ENCODE measurements at regions of chr10 and their contacts with region 1.

Region 1: DNA sequence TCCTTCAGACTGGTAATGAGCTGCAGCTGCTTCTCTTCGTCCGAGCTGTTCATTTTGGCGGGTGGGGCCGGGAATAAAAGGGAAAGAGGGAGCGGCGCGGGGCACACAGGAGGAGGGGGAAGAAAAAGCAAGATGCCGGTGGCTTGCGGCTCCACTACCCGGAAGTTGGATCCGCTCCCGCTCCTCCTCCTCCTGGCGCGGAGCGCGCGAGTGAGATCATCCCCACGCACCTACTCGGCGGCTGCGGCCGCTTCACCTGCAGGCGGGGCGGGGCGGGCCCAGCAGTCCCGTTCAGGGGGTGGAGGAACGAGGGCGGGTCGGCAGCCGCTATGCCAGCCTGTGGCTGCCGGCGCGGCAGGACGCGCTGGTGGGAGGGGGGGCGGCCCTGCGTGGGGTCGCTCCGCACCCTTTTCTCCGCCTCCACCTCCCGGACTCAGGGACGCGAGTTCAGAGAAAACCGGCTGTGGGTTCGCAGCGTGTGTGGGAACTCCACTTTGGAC is at the start of gene SHTN1:
- DNase-seq: peak; percentile 83
- H3K4me3 Mint-ChIP-seq: peak within 1 kb of the TSS; percentile 82
- H3K27ac Mint-ChIP-seq: peak within 1 kb of the TSS; percentile 89
- H3K4me1 Mint-ChIP-seq: peaks cover 17% of the 10 kb centered on the region
- H3K27me3 Mint-ChIP-seq: no peaks in the 10 kb centered on the region
- CTCF ChIP-seq: no peak
- total RNA-seq, gene SHTN1: 39.2 and 49.5 TPM in 2 replicates

Region 2: GRCh38 chr10:116849248-116850057 is 155.6 kb before region 1 on chr10 and contains the start of gene ENO4:
- CTCF ChIA-PET with region 1: no interaction called
- POLR2A ChIA-PET with region 1: no interaction called
- intact Hi-C with region 1: loop called (anchors 2 kb)
- DNase-seq: peak; percentile 89
- H3K4me3 Mint-ChIP-seq: peak within 1 kb of the TSS; percentile 90
- H3K27ac Mint-ChIP-seq: peak within 1 kb of the TSS; percentile 95
- H3K4me1 Mint-ChIP-seq: peaks cover 29% of the 10 kb centered on the region
- H3K27me3 Mint-ChIP-seq: no peaks in the 10 kb centered on the region
- CTCF ChIP-seq: no peak
- total RNA-seq, gene ENO4: 0.15 TPM in 1 of 2 replicates, not detected in the other

Region 3: DNA sequence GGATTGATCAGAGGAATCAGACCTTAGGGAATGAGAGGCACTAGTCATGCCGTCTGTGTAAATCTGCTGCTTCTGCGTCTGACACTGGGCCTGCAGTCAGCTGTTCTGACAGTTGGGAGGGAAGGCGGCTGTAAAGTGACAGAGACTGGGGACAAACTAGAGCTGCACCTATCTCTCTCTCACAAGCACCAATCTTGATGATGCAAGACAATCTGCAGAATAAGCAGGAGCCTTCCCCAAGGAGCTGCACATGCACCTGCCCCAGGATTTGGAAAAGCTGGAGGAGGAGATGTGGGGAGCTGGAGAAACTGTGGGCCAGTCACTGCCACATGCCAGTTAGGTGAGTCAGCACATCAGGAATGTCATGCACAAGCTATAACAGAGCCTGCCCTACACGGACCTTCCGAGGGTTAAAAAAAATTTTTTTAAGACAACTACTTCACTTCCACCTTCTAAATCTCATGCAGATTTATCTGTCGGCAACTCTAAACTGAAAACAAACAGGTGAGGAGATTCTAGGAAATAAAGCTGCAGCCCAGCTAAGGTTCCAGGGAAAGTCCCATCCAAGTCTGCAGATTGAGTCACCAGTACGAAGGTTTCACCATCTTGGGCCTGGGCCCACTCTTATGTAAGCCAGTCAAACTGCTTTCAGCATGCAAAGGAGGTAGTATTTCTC is 116.6 kb before region 1 on chr10:
- CTCF ChIA-PET with region 1: no interaction called
- POLR2A ChIA-PET with region 1: interaction called, 8 read pairs
- intact Hi-C with region 1: loop called (anchors 2 kb)
- DNase-seq: peak; percentile 93
- H3K4me3 Mint-ChIP-seq: peak overlapping the region; percentile 16
- H3K27ac Mint-ChIP-seq: no peak overlapping the region
- H3K4me1 Mint-ChIP-seq: peaks cover 27% of the 10 kb centered on the region
- H3K27me3 Mint-ChIP-seq: no peaks in the 10 kb centered on the region
- CTCF ChIP-seq: no peak

Region 4: DNA sequence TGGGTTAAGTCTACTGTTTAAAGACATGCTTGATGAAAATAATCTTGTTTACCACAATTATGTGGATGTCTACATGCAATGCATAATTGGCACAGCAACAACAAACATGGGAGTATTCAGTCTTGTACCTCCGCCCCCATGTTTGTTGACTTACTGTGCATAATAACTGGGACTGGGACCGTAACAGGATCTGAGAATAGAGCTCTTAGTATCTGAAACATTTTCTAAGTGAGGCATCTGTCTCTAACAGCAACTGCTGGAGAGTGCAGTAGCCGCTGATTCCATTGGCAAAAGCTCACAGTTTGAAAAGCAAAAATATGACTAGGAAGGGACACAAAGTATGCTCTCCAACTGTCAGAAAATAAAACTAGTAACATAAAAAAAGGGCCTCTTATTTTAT is 94.2 kb before region 1 on chr10:
- CTCF ChIA-PET with region 1: no interaction called
- POLR2A ChIA-PET with region 1: no interaction called
- intact Hi-C with region 1: no loop called
- DNase-seq: no peak
- H3K4me3 Mint-ChIP-seq: no peak overlapping the region
- H3K27ac Mint-ChIP-seq: no peak overlapping the region
- H3K4me1 Mint-ChIP-seq: no peaks in the 10 kb centered on the region
- H3K27me3 Mint-ChIP-seq: no peaks in the 10 kb centered on the region
- CTCF ChIP-seq: no peak

Region 5: DNA sequence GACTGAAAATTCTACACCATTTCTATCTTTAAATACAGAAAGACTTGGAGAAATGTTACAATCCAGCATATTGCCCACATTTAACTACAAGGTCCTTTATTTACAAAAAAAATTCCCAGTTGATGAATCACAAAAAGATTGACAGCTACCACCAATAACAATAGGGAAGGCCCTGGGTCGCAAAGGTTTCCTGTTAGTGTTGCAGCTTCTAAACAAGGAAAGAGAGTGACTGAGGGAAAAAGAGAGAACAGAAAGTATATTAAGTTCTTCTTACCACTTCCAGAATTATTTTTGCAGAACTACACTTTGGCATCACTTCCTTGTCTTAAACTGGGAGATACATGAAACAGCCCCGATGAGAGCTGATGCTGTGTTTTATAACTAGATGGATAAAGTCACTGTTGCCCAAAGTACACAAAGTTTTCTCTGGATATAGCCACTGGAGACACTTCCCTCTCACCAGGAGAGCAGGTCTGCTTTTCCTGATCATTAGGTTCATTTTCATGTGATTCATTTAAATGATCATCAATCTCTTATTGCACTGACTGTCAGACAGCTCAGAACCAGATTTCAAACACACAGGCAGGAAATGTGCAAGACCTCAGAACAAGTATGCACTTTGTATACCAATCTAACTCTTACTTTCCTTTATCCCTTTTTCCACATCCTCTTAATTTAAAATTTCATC is 57.1 kb before region 1 on chr10:
- CTCF ChIA-PET with region 1: no interaction called
- POLR2A ChIA-PET with region 1: interaction called, 10 read pairs
- intact Hi-C with region 1: loop called (anchors 1 kb)
- DNase-seq: peak; percentile 66
- H3K4me3 Mint-ChIP-seq: peak overlapping the region; percentile 33
- H3K27ac Mint-ChIP-seq: peak overlapping the region; percentile 79
- H3K4me1 Mint-ChIP-seq: peaks cover 15% of the 10 kb centered on the region
- H3K27me3 Mint-ChIP-seq: no peaks in the 10 kb centered on the region
- CTCF ChIP-seq: no peak

Region 6: GRCh38 chr10:116974473-116975005 is 30.5 kb before region 1 on chr10:
- CTCF ChIA-PET with region 1: interaction called, 4 read pairs
- POLR2A ChIA-PET with region 1: interaction called, 5 read pairs
- intact Hi-C with region 1: loop called (anchors 2 kb)
- DNase-seq: peak; percentile 82
- H3K4me3 Mint-ChIP-seq: peak overlapping the region; percentile 15
- H3K27ac Mint-ChIP-seq: peak overlapping the region; percentile 77
- H3K4me1 Mint-ChIP-seq: peaks cover 16% of the 10 kb centered on the region
- H3K27me3 Mint-ChIP-seq: no peaks in the 10 kb centered on the region
- CTCF ChIP-seq: no peak

Region 7: GRCh38 chr10:117167789-117168674 is 163.0 kb after region 1 on chr10:
- CTCF ChIA-PET with region 1: interaction called, 3 read pairs
- POLR2A ChIA-PET with region 1: no interaction called
- intact Hi-C with region 1: loop called (anchors 5 kb)
- DNase-seq: peak; percentile 43
- H3K4me3 Mint-ChIP-seq: peak overlapping the region; percentile 14
- H3K27ac Mint-ChIP-seq: no peak overlapping the region
- H3K4me1 Mint-ChIP-seq: no peaks in the 10 kb centered on the region
- H3K27me3 Mint-ChIP-seq: peaks cover 35% of the 10 kb centered on the region
- CTCF ChIP-seq: peak; percentile 95

Region 8: GRCh38 chr10:117684672-117685271 is 679.7 kb after region 1 on chr10:
- CTCF ChIA-PET with region 1: no interaction called
- POLR2A ChIA-PET with region 1: no interaction called
- intact Hi-C with region 1: no loop called
- DNase-seq: peak; percentile 91
- H3K4me3 Mint-ChIP-seq: no peak overlapping the region
- H3K27ac Mint-ChIP-seq: no peak overlapping the region
- H3K4me1 Mint-ChIP-seq: peaks cover 9% of the 10 kb centered on the region
- H3K27me3 Mint-ChIP-seq: no peaks in the 10 kb centered on the region
- CTCF ChIP-seq: peak; percentile 40

Measured in MCF 10A (cell line).